ENCODE measurements at regions of chrX and their contacts with region 1.

Region 1: DNA sequence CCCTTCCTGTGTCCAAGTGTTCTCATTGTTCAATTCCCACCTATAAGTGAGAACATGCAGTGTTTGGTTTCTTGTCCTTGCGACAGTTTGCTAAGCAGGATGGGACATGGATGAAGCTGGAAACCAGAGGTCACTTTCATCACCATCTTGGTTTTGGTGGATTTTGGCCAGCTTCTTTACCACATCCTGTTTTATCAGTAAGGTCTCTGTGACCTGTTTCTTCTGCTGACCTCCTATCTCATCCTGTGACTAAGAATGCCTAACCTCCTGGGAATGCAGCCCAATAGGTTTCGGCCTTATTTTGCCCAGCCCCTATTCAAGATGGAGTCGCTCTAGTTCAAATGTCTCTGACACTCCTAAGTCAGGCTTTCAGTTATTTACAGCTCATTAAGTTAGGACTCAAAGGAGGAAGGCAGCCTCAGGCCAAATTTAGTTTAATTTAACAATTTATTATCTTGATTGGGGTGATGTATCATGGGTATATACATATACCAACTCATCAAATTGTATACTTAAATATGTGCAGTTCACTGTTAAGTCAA is 169.9 kb upstream of the NDP start:
- DNase-seq: no peak
- H3K4me3 ChIP-seq: no peak overlapping the region
- H3K27ac ChIP-seq: no peak overlapping the region
- H3K4me1 ChIP-seq: no peaks in the 10 kb centered on the region
- H3K27me3 ChIP-seq: no peaks in the 10 kb centered on the region
- CTCF ChIP-seq: no peak
- POLR2A ChIP-seq: no peak

Region 2: DNA sequence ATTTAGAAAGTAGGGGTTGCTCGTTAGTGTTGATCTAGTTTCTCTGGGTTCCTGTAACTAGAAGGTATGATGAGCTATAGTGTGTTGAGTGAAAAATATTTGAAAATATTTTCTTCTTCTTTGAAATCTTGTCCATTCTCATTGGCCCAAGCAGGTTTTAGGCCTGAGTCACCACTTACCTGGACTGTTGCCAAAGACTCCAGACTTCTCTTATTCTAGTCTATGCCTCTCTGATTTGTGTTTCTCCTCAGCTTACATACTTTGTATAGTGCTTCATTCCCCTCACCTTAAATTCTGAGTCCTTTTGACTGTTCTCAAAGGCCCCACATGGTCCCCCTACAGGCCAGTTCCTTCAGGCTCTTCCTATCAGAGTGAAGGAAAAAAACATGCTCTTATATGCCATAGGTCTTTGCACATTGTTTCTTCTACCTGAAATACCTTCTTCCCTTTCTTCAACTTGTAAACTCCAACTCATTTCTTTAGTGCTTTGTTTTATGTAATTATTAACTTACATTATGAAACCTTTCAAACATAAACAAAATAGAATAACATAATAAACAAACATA is 1623.4 kb before region 1 on chrX:
- intact Hi-C with region 1: loop called (anchors 5 kb)
- DNase-seq: no peak
- H3K4me3 ChIP-seq: no peak overlapping the region
- H3K27ac ChIP-seq: no peak overlapping the region
- H3K4me1 ChIP-seq: no peaks in the 10 kb centered on the region
- H3K27me3 ChIP-seq: no peaks in the 10 kb centered on the region
- CTCF ChIP-seq: no peak
- POLR2A ChIP-seq: no peak

Measured in vagina (tissue), 2 donors.